ENCODE measurements at regions of chr19 and their contacts with region 1.

Region 1: DNA sequence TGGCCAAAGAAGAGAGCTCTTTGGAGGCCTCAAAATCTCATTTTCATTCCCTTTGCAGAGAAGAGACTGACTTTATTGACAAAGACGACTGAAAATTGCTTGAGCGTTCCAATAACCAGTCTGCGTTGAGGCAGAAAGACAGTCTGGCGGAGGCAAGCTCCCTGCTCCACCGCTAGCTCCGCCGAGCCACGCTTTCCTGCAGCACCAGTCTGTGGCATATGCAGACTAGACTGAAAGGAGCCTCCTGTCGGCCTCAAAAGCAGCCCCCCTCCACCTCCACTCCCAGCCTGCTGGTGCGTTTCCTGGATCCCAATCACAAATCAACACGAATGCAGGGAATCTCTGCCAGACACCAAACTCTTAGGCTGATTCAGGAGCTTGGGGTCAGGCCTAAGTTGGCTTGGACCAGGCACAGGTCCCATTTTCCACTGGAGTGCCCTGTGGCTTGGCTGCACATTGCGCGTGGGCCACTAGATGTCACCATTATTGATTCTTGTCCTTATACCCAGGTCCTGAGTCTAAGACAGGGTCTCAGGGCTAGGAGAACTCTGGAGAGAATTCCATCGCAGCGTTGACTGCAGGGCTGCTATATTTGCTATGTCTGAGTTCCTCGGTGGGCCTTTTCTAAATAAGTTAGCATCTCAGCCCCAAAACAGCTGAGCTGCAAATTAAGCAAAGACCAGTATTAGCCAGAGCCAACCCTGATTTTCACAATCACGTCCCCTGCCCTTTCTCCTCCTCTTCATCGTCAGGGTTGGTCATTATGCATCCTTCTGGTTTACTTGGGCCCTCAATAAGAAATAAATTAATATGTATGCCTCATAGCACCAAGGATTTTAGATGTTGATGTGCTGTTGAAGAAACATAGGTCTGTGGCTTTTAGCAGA is 5.2 kb upstream of the ZNF507 start:
- DNase-seq: no peak
- H3K4me3 ChIP-seq: no peak overlapping the region
- CTCF ChIP-seq: peak; percentile 70

Region 2: GRCh38 chr19:32357720-32358119 is 17.5 kb after region 1 on chr19:
- CTCF ChIA-PET with region 1: interaction called, 26 read pairs
- POLR2A ChIA-PET with region 1: interaction called, 4 read pairs
- DNase-seq: no peak
- H3K4me3 ChIP-seq: no peak overlapping the region
- CTCF ChIP-seq: no peak

Region 3: GRCh38 chr19:32464279-32464678 is 124.0 kb after region 1 on chr19:
- CTCF ChIA-PET with region 1: interaction called, 13 read pairs
- POLR2A ChIA-PET with region 1: no interaction called
- DNase-seq: no peak
- H3K4me3 ChIP-seq: no peak overlapping the region
- CTCF ChIP-seq: no peak

Measured in AG04449 (cell line).